CD8-positive, alpha-beta T cell (primary cell): ENCODE measurements at regions of chr19 and their contacts with region 1.

Region 1: DNA sequence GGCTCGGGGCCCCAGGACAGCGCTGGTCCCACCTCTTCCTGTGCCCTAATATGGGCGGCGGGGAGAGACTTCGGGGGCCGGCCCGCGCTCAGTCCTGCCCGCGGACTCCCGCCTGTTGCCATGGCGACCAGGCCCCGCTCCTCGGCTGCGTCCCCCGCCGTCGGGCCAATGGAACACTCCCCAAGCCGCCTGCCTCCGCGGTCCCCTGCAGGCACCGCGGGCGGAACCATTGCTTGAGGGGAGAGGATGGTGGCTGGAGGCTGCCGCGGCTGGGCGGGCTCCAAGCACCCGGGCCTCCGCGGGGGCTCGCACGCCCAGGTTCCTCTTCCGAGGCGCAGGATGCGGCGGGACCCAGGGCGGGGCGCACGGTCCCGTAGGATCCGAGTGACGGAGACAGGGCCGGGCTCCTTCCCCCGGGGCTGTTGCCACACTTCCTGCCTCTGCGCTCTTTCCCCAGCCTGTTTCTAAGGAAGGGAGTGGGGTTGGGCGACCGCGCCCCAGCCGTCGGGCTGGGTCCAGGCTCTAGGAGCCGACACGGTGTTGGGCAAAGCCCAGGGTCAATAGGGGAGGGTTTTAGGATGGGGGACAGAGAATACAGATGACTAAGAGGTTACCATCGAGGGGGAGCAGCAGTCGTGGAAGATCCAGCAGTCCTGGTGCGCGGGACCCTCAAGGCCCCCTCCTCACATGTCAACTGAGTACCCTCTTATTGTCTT is 1.2 kb upstream of the JUNB start:
- DNase-seq: peak; percentile 84 to 98 (median 91)
- ATAC-seq: peak; percentile 29
- H3K4me3 ChIP-seq: peak overlapping the region; percentile 86 to 100
- H3K4me3 Mint-ChIP-seq: peak overlapping the region; percentile 93
- H3K27ac ChIP-seq: peak overlapping the region; percentile 100
- H3K27ac Mint-ChIP-seq: peak overlapping the region; percentile 97
- H3K4me1 ChIP-seq: peaks cover 47% of the 10 kb centered on the region
- H3K4me1 Mint-ChIP-seq: peaks cover 37% of the 10 kb centered on the region
- H3K27me3 ChIP-seq: no peaks in the 10 kb centered on the region
- H3K27me3 Mint-ChIP-seq: no peaks in the 10 kb centered on the region
- CTCF ChIP-seq: no peak

Region 2: GRCh38 chr19:12757544-12758274 is 32.4 kb before region 1 on chr19:
- CTCF ChIA-PET with region 1: interaction called, 339 read pairs
- POLR2A ChIA-PET with region 1: no interaction called
- intact Hi-C with region 1: no loop called
- DNase-seq: peak; percentile 32 to 74 (median 49)
- ATAC-seq: peak; percentile 78
- H3K4me3 ChIP-seq: no peak overlapping the region
- H3K4me3 Mint-ChIP-seq: peak overlapping the region; percentile 18
- H3K27ac ChIP-seq: no peak overlapping the region
- H3K27ac Mint-ChIP-seq: no peak overlapping the region
- H3K4me1 ChIP-seq: peaks cover 7% of the 10 kb centered on the region
- H3K4me1 Mint-ChIP-seq: peaks cover 6% of the 10 kb centered on the region
- H3K27me3 ChIP-seq: peaks cover 3 to 4% of the 10 kb centered on the region in 2 experiments
- H3K27me3 Mint-ChIP-seq: peaks cover 16% of the 10 kb centered on the region
- CTCF ChIP-seq: peak; percentile 93

Region 3: GRCh38 chr19:12777217-12778016 is 12.6 kb before region 1 on chr19:
- CTCF ChIA-PET with region 1: interaction called, 396 read pairs
- POLR2A ChIA-PET with region 1: interaction called, 215 read pairs
- intact Hi-C with region 1: loop called (anchors 1 kb)
- DNase-seq: peak; percentile 68 to 89 (median 80)
- ATAC-seq: peak; percentile 4
- H3K4me3 ChIP-seq: peak overlapping the region; percentile 63 to 86
- H3K4me3 Mint-ChIP-seq: peak overlapping the region; percentile 82
- H3K27ac ChIP-seq: peak overlapping the region; percentile 57 to 87
- H3K27ac Mint-ChIP-seq: peak overlapping the region; percentile 85
- H3K4me1 ChIP-seq: peaks cover 38% of the 10 kb centered on the region
- H3K4me1 Mint-ChIP-seq: peaks cover 36% of the 10 kb centered on the region
- H3K27me3 ChIP-seq: no peaks in the 10 kb centered on the region
- H3K27me3 Mint-ChIP-seq: no peaks in the 10 kb centered on the region
- CTCF ChIP-seq: peak; percentile 97

Region 4: DNA sequence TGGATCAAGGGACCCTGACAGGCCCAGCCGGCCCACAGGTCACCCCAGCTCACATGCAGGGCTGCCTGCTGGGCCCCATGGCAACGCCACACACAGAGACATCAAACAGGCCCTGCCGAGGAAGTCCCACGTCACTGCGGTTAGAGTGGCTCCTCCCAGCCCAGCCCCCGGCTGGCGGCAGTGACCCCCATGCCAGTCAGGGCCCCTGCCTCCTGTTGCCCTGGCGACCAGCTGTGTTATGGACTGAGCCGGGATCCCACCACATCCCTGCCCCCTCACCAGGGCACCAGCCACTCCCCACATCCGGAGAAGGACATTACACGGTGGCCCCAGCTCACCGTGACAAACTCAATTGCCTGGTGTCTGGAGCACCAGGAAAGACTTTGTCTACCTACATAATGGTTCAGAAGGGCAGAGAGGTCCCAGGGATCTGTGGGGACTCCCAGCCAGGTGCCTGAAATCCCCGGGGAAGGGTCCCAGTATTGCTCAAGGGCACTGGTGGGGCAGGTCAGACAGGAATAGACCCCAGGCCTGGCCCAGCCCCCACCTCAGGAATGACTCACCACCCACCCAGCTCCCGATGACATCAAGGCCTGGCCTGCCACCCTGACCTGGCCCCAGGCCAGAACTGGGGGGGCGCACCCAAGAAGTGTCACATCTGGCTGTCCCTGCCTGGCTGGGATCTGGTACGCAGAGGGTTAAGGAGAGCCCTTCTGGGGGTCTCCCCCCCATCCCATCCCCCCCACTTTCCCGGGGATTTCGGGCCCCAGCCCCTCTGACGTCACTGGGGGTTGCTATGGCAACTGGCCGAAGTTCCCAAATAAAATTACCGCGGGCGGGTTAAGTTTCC is 1056.7 kb after region 1 on chr19:
- CTCF ChIA-PET with region 1: no interaction called
- POLR2A ChIA-PET with region 1: no interaction called
- intact Hi-C with region 1: loop called (anchors 2 to 5 kb)
- DNase-seq: peak; percentile 90 to 99 (median 97)
- ATAC-seq: peak; percentile 54
- H3K4me3 ChIP-seq: peak overlapping the region; percentile 55 to 68
- H3K4me3 Mint-ChIP-seq: peak overlapping the region; percentile 89
- H3K27ac ChIP-seq: peak overlapping the region; percentile 98 to 99
- H3K27ac Mint-ChIP-seq: peak overlapping the region; percentile 100
- H3K4me1 ChIP-seq: peaks cover 65% of the 10 kb centered on the region
- H3K4me1 Mint-ChIP-seq: peaks cover 56% of the 10 kb centered on the region
- H3K27me3 ChIP-seq: no peaks in the 10 kb centered on the region
- H3K27me3 Mint-ChIP-seq: no peaks in the 10 kb centered on the region
- CTCF ChIP-seq: no peak